A549 (cell line): ENCODE measurements at regions of chr16 and their contacts with region 1.

Region 1: DNA sequence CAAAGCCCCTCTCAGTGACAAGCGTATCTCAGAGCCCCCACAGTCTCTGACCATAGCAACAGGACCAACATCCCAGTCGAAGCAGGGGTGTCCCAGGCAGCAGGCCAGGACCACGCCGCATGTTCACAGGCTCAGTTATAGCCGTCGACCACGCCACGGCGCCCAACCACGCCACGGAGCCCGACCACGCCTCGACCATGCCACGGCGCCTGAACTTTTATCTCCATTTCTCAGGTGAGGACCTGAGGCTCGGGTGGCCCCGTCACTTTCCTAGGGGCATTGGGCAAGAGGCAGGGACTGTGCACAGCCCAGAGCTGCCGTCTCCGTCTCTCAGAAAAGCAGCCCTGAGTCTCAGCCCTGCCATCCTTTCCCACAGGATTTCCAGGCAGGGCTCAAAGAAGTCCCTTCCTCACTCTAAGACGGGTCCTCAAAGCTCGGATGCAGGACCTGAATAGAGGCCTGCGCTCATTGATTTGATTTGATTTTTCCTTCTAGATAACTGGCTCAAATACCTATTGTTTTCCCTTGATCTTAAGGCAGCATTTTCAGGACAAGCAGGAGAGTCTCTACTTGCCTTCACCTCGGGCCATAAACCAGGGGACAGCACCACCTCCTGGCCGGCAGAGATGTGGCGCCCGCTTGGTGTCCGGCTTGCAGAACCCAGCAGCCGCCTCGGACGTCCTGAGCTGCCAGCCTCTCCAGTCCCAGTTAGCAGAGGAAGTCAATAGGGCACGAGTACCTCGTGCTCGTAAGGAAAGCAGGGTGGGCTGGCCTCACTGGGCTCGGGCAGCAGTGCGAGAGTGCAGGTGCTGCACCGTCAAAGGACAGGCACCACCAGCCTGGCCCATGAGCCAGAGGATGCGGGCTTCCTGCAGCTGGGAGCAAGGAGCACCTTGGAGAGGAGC is 38.7 kb downstream of the C16orf95 start:
- DNase-seq: peak; percentile 78 to 91
- ATAC-seq: peak; percentile 97 to 100
- H3K4me3 ChIP-seq: no peak overlapping the region
- H3K27ac ChIP-seq: peak overlapping the region in 1 of 2 experiments; percentile 2; a peak in 1 of 6 replicates
- H3K4me1 ChIP-seq: 0 out of 3 replicates have a peak, but pooled peaks cover 5% of the 10 kb centered on the region
- CTCF ChIP-seq: peak; percentile 85
- EP300 ChIP-seq: no peak
- POLR2A ChIP-seq: no peak
- RAD21 ChIP-seq: peak; percentile 93 to 96

Region 2: GRCh38 chr16:86554917-86555703 is 723.3 kb before region 1 on chr16 and contains the start of gene MTHFSD:
- CTCF ChIA-PET with region 1: interaction called, 80 read pairs
- POLR2A ChIA-PET with region 1: no interaction called
- DNase-seq: peak; percentile 92
- ATAC-seq: peak; percentile 90 to 96
- H3K4me3 ChIP-seq: peak within 1 kb of the TSS; percentile 82
- H3K27ac ChIP-seq: peak within 1 kb of the TSS; percentile 84 to 97
- H3K4me1 ChIP-seq: peaks cover 4% of the 10 kb centered on the region; the same call in 1 of the 3 replicates
- CTCF ChIP-seq: 0 out of 3 replicates have a peak, but pooled peaks have one; percentile 10
- EP300 ChIP-seq: no peak
- POLR2A ChIP-seq: peak; percentile 84
- RAD21 ChIP-seq: no peak
- polyA plus RNA-seq, gene MTHFSD: 14.9 and 16.9 TPM in 2 replicates

Region 3: DNA sequence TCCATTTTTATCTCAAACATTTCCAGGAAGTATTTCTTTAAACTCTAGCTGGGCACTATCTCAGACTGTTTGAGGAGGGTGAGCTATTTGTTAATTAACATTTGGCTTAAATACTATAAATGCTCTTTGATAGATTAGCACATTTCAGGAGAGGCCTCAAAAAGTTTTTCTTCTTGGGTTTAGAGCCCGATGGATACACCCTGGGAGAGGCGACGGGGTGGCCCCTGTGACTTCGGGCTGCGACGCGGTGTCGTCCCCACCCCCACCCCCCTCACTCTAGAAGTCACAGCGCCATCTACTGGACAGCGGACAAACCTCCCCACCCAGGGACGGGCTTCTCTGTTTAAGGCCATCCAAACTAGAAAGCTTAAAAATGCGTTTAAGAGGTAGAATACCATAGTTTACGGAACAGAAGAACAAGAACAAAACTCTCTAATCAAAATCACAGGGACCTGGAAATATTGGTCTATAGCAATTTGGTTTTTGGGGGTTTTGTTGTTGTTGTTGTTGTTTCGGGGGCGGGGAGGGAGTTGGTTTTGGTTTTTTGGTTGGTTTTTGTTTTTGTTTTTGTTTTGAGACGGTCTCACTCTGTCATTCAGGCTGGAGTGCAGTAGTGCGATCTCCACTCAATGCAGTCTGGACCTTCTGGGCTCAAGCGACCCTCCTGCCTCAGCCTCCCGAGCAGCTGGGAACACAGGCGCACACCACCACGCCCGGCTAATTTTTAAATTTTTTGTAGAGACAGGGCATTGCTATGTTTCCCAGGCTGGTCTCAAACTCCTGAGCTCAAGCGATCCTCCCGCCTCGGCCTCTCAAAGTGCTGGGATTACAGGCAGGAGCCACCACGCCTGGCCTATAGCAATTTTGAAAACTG is 215.6 kb before region 1 on chr16:
- CTCF ChIA-PET with region 1: interaction called, 51 read pairs
- POLR2A ChIA-PET with region 1: no interaction called
- DNase-seq: peak; percentile 70 to 91
- ATAC-seq: peak; percentile 92 to 98
- H3K4me3 ChIP-seq: peak overlapping the region; percentile 30; the same call in 2 of the 3 replicates
- H3K27ac ChIP-seq: peak overlapping the region; percentile 58 to 69; a peak in 4 of 6 replicates
- H3K4me1 ChIP-seq: peaks cover 4% of the 10 kb centered on the region; the same call in 1 of the 3 replicates
- CTCF ChIP-seq: peak; percentile 84
- EP300 ChIP-seq: no peak
- POLR2A ChIP-seq: no peak
- RAD21 ChIP-seq: peak; percentile 92 to 98

Region 4: DNA sequence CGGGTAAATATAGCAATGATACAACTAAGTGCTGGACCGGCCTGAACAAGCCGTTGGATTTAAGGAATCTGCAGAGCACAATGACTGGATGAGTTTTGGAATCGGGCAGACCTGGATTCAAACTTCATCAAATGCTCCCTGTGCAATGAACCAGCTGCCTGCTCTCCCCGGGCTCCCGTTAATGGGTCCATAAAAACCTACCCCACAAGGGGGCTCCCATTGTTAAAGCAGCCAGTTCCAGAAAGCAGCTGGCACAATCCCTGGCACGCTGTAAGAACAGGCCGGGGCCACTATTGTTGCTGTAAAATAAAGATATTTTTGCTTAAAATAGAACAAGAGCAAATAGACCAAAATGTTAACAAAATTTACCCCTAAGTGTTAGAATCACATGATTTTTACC is 93.1 kb before region 1 on chr16:
- CTCF ChIA-PET with region 1: interaction called, 10 read pairs
- POLR2A ChIA-PET with region 1: no interaction called
- DNase-seq: no peak
- ATAC-seq: no peak
- H3K4me3 ChIP-seq: no peak overlapping the region
- H3K27ac ChIP-seq: no peak overlapping the region
- H3K4me1 ChIP-seq: no peaks in the 10 kb centered on the region
- CTCF ChIP-seq: no peak
- EP300 ChIP-seq: no peak
- POLR2A ChIP-seq: no peak
- RAD21 ChIP-seq: no peak

Region 5: GRCh38 chr16:87210907-87211306 is 67.5 kb before region 1 on chr16:
- CTCF ChIA-PET with region 1: interaction called, 27 read pairs
- POLR2A ChIA-PET with region 1: no interaction called
- DNase-seq: peak in 1 of 2 experiments; percentile 22
- ATAC-seq: no peak
- H3K4me3 ChIP-seq: no peak overlapping the region
- H3K27ac ChIP-seq: peak overlapping the region; percentile 48 to 64; a peak in 4 of 6 replicates
- H3K4me1 ChIP-seq: peaks cover 47% of the 10 kb centered on the region
- CTCF ChIP-seq: no peak
- EP300 ChIP-seq: no peak
- POLR2A ChIP-seq: no peak
- RAD21 ChIP-seq: no peak

Region 6: GRCh38 chr16:87263471-87263961 is 14.9 kb before region 1 on chr16:
- CTCF ChIA-PET with region 1: interaction called, 46 read pairs
- POLR2A ChIA-PET with region 1: no interaction called
- DNase-seq: no peak
- ATAC-seq: no peak
- H3K4me3 ChIP-seq: no peak overlapping the region
- H3K27ac ChIP-seq: no peak overlapping the region
- H3K4me1 ChIP-seq: peaks cover 16% of the 10 kb centered on the region; the same call in 2 of the 3 replicates
- CTCF ChIP-seq: no peak
- EP300 ChIP-seq: no peak
- POLR2A ChIP-seq: no peak
- RAD21 ChIP-seq: no peak

Region 7: DNA sequence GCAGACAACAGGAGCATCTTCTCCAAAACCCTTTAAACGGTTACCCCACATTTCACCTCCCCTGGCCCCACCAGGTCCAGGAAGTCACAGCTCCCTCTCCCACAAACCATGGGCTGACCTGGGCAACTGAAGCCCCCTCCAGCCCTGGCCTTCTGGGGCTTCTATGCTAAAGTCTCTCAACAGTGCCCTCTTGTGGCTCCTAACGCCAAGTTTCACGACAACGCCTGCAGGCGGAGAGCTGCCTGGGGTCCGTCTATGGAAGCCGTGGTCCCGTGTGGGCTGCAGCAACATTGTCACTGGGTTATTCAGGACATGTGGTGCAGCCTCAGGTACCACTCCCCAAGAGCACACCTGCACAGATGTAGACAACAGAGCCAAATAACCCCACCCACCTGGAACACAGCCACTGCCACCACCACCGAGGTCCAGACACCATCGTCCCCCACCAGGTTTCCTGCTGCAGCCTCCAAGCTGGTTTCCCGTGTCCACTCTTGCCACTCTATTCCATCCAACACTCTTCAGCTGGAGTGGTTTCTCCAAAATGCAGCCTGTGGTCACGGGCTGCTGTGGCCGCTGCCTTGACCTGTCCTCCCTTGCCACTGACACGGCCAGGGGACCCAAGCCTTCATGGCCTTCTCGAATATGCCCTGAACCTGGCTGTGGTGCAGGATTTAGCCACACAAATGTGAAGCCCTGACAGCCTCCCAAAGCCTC is 19.6 kb after region 1 on chr16:
- CTCF ChIA-PET with region 1: interaction called, 46 read pairs
- POLR2A ChIA-PET with region 1: no interaction called
- DNase-seq: peak in 1 of 2 experiments; percentile 68
- ATAC-seq: peak; percentile 46 to 86; a peak in 4 of 6 replicates
- H3K4me3 ChIP-seq: no peak overlapping the region
- H3K27ac ChIP-seq: no peak overlapping the region
- H3K4me1 ChIP-seq: no peaks in the 10 kb centered on the region
- CTCF ChIP-seq: peak; percentile 60
- EP300 ChIP-seq: no peak
- POLR2A ChIP-seq: no peak
- RAD21 ChIP-seq: peak; percentile 36 to 50